Panc1 (cell line): ENCODE measurements at regions of chr17 and their contacts with region 1.

Region 1: GRCh38 chr17:29664743-29665480 is 42.2 kb upstream of the CORO6 start:
- DNase-seq: peak; percentile 67
- ATAC-seq: peak; percentile 92
- H3K4me3 ChIP-seq: no peak overlapping the region
- H3K27ac ChIP-seq: peak overlapping the region; percentile 20; the same call in 1 of the 2 replicates
- H3K4me1 ChIP-seq: peaks cover 4% of the 10 kb centered on the region; the same call in 1 of the 2 replicates
- H3K27me3 ChIP-seq: no peaks in the 10 kb centered on the region
- CTCF ChIP-seq: no peak

Region 2: DNA sequence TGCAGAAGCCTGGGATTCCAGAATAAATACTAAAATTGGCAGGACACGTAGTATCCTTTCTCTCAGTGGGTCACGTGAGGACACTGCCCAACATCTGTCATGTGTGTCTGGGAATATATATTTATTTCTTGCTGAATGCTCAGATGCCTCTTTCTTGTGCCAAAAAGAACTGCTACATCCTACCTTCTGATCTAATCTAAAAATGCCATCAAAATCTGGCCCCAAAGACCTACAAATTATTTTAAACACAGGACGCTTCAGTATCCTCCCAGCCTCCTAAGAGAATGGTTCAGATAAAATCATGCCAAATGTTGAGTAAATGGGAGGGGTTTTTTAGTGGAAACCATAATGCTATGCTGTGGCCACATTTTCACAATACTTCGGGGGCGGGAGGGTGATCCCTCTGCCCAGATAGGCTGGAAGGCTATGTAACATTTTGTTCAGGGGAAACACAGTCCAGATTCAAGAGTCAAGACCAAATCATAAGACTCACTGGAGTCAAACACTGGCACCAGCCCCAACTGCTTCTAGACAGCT is 19.3 kb before region 1 on chr17:
- CTCF ChIA-PET with region 1: no interaction called
- POLR2A ChIA-PET with region 1: no interaction called
- in situ Hi-C with region 1: no loop called
- intact Hi-C with region 1: no loop called
- DNase-seq: no peak
- ATAC-seq: no peak
- H3K4me3 ChIP-seq: no peak overlapping the region
- H3K27ac ChIP-seq: no peak overlapping the region
- H3K4me1 ChIP-seq: no peaks in the 10 kb centered on the region
- H3K27me3 ChIP-seq: no peaks in the 10 kb centered on the region
- CTCF ChIP-seq: no peak

Region 3: GRCh38 chr17:29710891-29711418 is 46.0 kb after region 1 on chr17:
- CTCF ChIA-PET with region 1: no interaction called
- POLR2A ChIA-PET with region 1: no interaction called
- in situ Hi-C with region 1: no loop called
- intact Hi-C with region 1: loop called (anchors 10 kb)
- DNase-seq: no peak
- ATAC-seq: no peak
- H3K4me3 ChIP-seq: no peak overlapping the region
- H3K27ac ChIP-seq: 0 out of 2 replicates have a peak overlapping the region, but pooled peaks have one; percentile 3
- H3K4me1 ChIP-seq: peaks cover 16% of the 10 kb centered on the region
- H3K27me3 ChIP-seq: no peaks in the 10 kb centered on the region
- CTCF ChIP-seq: no peak

Region 4: GRCh38 chr17:30062372-30062771 is 397.5 kb after region 1 on chr17:
- CTCF ChIA-PET with region 1: no interaction called
- POLR2A ChIA-PET with region 1: no interaction called
- in situ Hi-C with region 1: no loop called
- intact Hi-C with region 1: no loop called
- DNase-seq: no peak
- ATAC-seq: no peak
- H3K4me3 ChIP-seq: no peak overlapping the region
- H3K27ac ChIP-seq: no peak overlapping the region
- H3K4me1 ChIP-seq: no peaks in the 10 kb centered on the region
- H3K27me3 ChIP-seq: peaks cover 12% of the 10 kb centered on the region; the same call in 1 of the 2 replicates
- CTCF ChIP-seq: no peak